PC-9 (cell line): ENCODE measurements at regions of chr16 and their contacts with region 1.

Region 1: DNA sequence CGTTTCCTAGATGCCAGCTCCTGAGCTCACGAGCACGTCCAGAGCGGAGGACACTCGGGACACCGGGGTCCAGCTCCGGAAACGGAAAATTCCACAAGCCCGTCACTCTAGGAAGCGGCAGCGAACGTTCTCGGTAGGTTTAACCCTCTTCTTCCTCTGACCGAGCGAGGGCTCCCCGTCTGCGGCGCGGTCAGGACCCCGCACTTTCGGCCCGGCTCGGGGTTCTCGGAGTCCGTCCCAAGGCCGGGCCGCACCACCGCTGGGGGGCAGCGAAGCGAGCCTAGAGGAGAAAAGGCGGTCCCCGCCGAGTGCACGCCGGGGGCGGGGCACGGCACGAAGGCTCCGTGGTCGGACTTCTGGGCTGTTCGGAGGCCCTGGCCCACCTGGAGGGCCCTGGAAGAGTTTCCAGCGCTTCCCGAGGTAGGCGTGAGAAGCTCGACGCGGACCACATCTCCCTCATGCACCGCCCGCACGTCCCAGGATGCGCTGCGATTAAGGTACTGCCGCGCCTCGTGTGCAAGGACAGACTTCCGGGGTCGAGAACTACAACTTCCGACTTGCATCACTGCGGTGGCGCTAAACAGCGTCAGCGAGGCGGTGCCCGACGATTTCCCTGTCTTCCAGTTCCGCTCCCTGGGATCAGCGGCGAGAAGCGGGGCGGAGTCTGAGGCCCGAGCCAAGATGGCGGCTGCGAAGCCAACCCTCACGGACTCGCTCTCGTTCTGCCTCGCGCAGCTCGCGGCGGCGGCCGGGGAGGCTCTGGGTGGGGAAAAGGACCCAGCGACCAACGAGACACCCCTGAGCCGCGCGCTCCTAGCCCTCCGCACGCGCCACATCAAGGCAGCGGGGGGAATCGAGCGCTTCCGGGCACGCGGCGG is at the start of gene ARMC5:
- DNase-seq: peak; percentile 96 to 99
- H3K4me3 ChIP-seq: peak within 1 kb of the TSS; percentile 80
- H3K27ac ChIP-seq: peak within 1 kb of the TSS; percentile 95
- H3K4me1 ChIP-seq: peaks cover 41% of the 10 kb centered on the region
- H3K27me3 ChIP-seq: no peaks in the 10 kb centered on the region
- CTCF ChIP-seq: peak; percentile 66
- total RNA-seq, gene ARMC5: 18.6 and 21.4 TPM in 2 replicates

Region 2: GRCh38 chr16:30957456-30958174 is 501.5 kb before region 1 on chr16 and contains the start of gene SETD1A:
- CTCF ChIA-PET with region 1: no interaction called
- POLR2A ChIA-PET with region 1: no interaction called
- intact Hi-C with region 1: loop called (anchors 10 kb)
- DNase-seq: peak; percentile 86 to 96
- H3K4me3 ChIP-seq: peak within 1 kb of the TSS; percentile 97
- H3K27ac ChIP-seq: peak within 1 kb of the TSS; percentile 82
- H3K4me1 ChIP-seq: peaks cover 9% of the 10 kb centered on the region
- H3K27me3 ChIP-seq: no peaks in the 10 kb centered on the region
- CTCF ChIP-seq: no peak
- total RNA-seq, gene SETD1A: 29.6 and 33.2 TPM in 2 replicates

Region 3: DNA sequence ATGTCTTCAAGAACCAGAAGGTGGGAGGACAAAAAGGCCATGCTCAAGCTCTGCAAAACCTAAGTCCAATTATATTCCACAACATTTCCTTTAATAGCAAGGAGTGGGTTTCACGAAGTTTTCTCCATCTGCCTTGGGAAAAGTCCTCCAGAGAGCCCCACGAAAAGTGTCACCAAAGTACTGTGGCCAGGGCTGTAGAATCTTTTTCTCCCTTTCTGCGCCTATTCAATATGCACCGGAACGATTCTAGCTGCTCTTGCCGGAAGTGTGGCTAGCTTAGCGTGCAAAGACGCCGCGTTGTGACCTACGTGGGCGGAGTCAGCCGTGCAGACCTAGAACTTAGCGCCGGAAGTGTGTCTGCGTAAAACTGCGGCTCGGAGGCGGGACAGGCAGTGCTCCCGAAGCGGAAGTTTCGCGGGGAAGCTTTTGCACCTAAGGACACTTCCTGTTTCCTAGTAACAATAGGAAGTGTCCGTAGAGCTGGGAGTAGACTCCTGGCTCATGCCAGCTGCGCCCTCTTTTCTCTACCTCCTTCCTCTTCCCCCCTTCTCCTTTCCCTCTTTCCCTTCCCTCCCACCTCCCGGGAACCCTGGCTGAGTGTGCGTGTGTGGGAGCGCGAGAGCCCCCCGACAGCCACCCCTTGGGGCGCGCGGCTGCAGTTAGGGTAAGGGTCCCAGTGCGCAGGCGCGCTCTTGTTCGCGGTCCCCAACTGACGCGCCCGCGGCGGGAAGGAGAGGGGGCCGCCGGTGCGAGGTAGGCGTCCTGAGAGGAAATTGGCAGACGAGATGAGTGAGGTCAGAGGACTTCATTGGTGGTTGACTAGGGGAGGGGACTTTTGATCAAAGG is 384.9 kb before region 1 on chr16 and contains the starts of genes ZNF646 and ZNF668:
- CTCF ChIA-PET with region 1: no interaction called
- POLR2A ChIA-PET with region 1: interaction called, 3 read pairs
- intact Hi-C with region 1: loop called (anchors 1 kb)
- DNase-seq: peak; percentile 98 to 99
- H3K4me3 ChIP-seq: peak within 1 kb of the TSS; percentile 89
- H3K27ac ChIP-seq: peak within 1 kb of the TSS; percentile 62
- H3K4me1 ChIP-seq: peaks cover 20% of the 10 kb centered on the region
- H3K27me3 ChIP-seq: no peaks in the 10 kb centered on the region
- CTCF ChIP-seq: no peak
- total RNA-seq, gene ZNF646: 25.4 and 30.7 TPM in 2 replicates
- total RNA-seq, gene ZNF668: 13.2 and 17.4 TPM in 2 replicates

Region 4: GRCh38 chr16:31344712-31345111 is 114.4 kb before region 1 on chr16:
- CTCF ChIA-PET with region 1: no interaction called
- POLR2A ChIA-PET with region 1: no interaction called
- intact Hi-C with region 1: no loop called
- DNase-seq: no peak
- H3K4me3 ChIP-seq: no peak overlapping the region
- H3K27ac ChIP-seq: no peak overlapping the region
- H3K4me1 ChIP-seq: no peaks in the 10 kb centered on the region
- H3K27me3 ChIP-seq: peaks cover 44% of the 10 kb centered on the region
- CTCF ChIP-seq: no peak

Region 5: GRCh38 chr16:31472709-31473203 is 13.7 kb after region 1 on chr16:
- CTCF ChIA-PET with region 1: interaction called, 10 read pairs
- POLR2A ChIA-PET with region 1: interaction called, 9 read pairs
- intact Hi-C with region 1: loop called (anchors 1 kb)
- DNase-seq: peak; percentile 62 to 95
- H3K4me3 ChIP-seq: peak overlapping the region; percentile 60; the same call in 1 of the 2 replicates
- H3K27ac ChIP-seq: no peak overlapping the region
- H3K4me1 ChIP-seq: peaks cover 13% of the 10 kb centered on the region; the same call in 1 of the 2 replicates
- H3K27me3 ChIP-seq: no peaks in the 10 kb centered on the region
- CTCF ChIP-seq: peak; percentile 71

Region 6: DNA sequence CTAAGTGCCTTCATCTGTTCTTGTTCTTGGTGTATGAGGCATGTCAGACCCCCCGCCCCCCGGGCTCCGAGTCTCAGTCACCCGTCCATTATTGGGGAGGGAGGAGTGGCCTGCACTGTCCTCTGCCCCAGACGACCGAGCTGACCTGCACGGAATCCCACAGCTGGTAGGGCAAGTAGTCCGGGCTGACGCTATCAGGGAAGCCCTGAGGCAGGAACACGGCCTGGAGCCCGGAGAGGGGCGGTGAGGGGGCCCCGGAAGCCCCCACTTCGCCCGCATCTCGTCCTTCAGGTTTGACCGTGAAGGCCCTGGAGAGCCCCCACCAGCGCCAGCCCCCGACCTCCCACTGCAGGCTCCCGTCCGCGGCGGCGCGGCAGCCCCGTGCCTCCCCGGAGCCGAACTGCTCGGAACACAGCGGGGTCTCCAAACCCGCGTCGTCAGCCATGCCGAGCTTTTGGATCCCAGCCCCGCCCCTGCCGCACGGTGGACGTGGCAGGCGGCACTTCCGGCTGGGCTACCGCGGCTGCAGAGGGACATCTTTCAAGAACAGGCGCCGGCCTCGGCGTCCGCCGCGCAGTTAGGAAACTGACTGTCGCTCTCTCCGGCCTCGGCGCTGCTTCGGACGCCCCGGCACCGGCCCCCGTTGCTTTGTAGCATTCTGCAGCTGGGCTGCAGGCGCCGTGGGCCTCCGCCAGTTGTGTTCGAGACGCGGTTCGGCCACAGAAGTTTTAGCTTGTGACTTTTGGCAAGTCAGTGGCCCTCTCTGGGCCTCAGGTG is 49.0 kb after region 1 on chr16 and contains the start of gene RUSF1:
- CTCF ChIA-PET with region 1: no interaction called
- POLR2A ChIA-PET with region 1: interaction called, 7 read pairs
- intact Hi-C with region 1: loop called (anchors 1 kb)
- DNase-seq: peak; percentile 79 to 91
- H3K4me3 ChIP-seq: peak within 1 kb of the TSS; percentile 69
- H3K27ac ChIP-seq: peak within 1 kb of the TSS; percentile 69
- H3K4me1 ChIP-seq: peaks cover 22% of the 10 kb centered on the region
- H3K27me3 ChIP-seq: no peaks in the 10 kb centered on the region; the same call in 1 of the 2 replicates
- CTCF ChIP-seq: no peak
- total RNA-seq, gene RUSF1: 86.7 and 94.7 TPM in 2 replicates

Region 7: GRCh38 chr16:31696968-31697743 is 238.1 kb after region 1 on chr16:
- CTCF ChIA-PET with region 1: no interaction called
- POLR2A ChIA-PET with region 1: no interaction called
- intact Hi-C with region 1: loop called (anchors 5 kb)
- DNase-seq: no peak
- H3K4me3 ChIP-seq: no peak overlapping the region
- H3K27ac ChIP-seq: no peak overlapping the region
- H3K4me1 ChIP-seq: peaks cover 10% of the 10 kb centered on the region
- H3K27me3 ChIP-seq: no peaks in the 10 kb centered on the region
- CTCF ChIP-seq: peak; percentile 78

Region 8: DNA sequence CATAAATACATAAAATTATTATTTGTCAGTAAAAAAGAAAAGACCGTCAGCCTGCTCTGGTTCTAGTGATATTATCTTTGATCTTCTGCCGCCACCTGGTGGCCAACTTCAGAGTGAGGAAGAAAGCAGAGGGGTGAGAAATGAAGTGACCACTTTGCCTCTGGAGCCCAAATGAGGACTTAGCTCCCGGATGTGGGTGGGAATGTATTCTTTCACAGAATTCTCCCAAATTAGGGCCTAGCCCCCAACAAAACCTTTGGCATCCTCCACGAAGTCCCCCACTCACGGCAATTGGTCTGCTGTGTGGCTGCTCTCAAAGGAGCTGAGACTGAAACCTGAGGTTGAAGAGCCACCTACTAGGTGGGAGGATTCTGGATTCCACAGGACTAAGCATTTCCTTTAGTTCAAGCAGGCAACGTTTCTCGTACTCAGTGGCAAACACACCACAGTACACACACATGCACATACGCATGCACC is 409.6 kb after region 1 on chr16:
- CTCF ChIA-PET with region 1: no interaction called
- POLR2A ChIA-PET with region 1: interaction called, 5 read pairs
- intact Hi-C with region 1: loop called (anchors 5 kb)
- DNase-seq: peak; percentile 54 to 78
- H3K4me3 ChIP-seq: no peak overlapping the region
- H3K27ac ChIP-seq: no peak overlapping the region
- H3K4me1 ChIP-seq: no peaks in the 10 kb centered on the region
- H3K27me3 ChIP-seq: peaks cover 13% of the 10 kb centered on the region
- CTCF ChIP-seq: peak; percentile 94